ENCODE measurements at regions of chr7 and their contacts with region 1.

Region 1: GRCh38 chr7:142438235-142438922 is 180.5 kb upstream of the PRSS58 start:
- DNase-seq: no peak
- H3K4me3 ChIP-seq: no peak overlapping the region
- CTCF ChIP-seq: peak; percentile 62

Region 2: DNA sequence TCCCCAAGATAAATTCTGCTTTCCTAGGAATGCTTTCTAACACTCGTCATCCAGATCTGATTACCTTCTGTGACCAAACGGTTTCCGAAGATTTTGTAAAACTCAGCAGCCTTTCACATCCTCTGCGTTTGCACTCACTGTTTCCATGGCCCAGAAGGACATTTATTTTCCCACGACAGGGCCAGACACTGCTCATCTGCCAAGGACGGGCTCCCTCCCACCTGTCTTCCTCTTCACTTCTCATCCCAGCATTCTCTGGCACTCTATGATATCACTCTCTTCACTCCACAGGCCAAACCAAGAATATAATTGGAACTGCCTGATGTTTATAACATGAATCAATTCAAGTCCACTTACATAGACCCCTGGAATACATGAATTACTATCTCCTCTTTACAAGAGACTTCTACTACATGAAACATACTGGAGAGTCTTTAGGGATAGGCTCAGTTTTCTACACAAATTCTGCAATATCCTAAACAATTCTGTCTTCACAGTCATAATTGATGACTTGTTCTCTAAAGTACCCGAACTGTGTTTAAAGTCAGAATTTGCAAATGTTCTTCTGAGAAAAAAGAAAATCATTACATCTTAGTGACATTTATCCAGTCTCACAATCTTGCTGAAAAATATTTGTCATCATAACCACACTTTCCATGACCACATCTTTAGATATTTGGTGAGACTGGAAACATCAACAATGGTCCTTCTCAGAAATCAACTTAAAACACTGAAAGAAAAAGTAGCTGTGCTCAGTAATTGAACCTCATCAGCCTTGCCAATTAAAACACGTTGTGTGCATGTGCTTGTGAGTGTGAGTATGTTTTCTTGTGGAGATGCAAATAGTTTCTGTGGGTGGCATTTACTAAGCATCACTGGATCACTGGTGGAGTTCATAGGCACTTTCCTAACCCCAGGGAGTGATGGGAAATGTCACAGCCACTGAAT is 101.1 kb before region 1 on chr7:
- CTCF ChIA-PET with region 1: no interaction called
- POLR2A ChIA-PET with region 1: no interaction called
- DNase-seq: no peak
- H3K4me3 ChIP-seq: no peak overlapping the region
- CTCF ChIP-seq: no peak

Region 3: GRCh38 chr7:142412551-142413193 is 25.7 kb before region 1 on chr7:
- CTCF ChIA-PET with region 1: interaction called, 21 read pairs
- POLR2A ChIA-PET with region 1: no interaction called
- DNase-seq: peak; percentile 16
- H3K4me3 ChIP-seq: no peak overlapping the region
- CTCF ChIP-seq: peak; percentile 84

Region 4: GRCh38 chr7:142420559-142421362 is 17.6 kb before region 1 on chr7:
- CTCF ChIA-PET with region 1: interaction called, 10 read pairs
- POLR2A ChIA-PET with region 1: no interaction called
- DNase-seq: no peak
- H3K4me3 ChIP-seq: no peak overlapping the region
- CTCF ChIP-seq: peak; percentile 75

Region 5: GRCh38 chr7:142516038-142516501 is 77.7 kb after region 1 on chr7:
- CTCF ChIA-PET with region 1: interaction called, 10 read pairs
- POLR2A ChIA-PET with region 1: no interaction called
- DNase-seq: peak; percentile 29
- H3K4me3 ChIP-seq: no peak overlapping the region
- CTCF ChIP-seq: peak; percentile 68

Measured in AG04449 (cell line).